ENCODE measurements at regions of chr1 and their contacts with region 1.

Region 1: GRCh38 chr1:42846257-42847110 is at the start of gene ZNF691:
- DNase-seq: peak; percentile 91
- H3K4me3 ChIP-seq: peak within 1 kb of the TSS; percentile 95
- H3K27ac ChIP-seq: no peak within 1 kb of the TSS
- H3K27me3 ChIP-seq: no peaks in the 10 kb centered on the region
- CTCF ChIP-seq: peak; percentile 59
- polyA plus RNA-seq, gene ZNF691: 5.6 and 6.3 TPM in 2 replicates

Region 2: GRCh38 chr1:42816585-42817434 is 29.7 kb before region 1 on chr1 and contains the starts of genes ERMAP and SVBP:
- CTCF ChIA-PET with region 1: interaction called, 18 read pairs
- POLR2A ChIA-PET with region 1: interaction called, 16 read pairs
- DNase-seq: peak; percentile 61
- H3K4me3 ChIP-seq: peak within 1 kb of the TSS; percentile 86
- H3K27ac ChIP-seq: peak within 1 kb of the TSS; percentile 97
- H3K27me3 ChIP-seq: no peaks in the 10 kb centered on the region
- CTCF ChIP-seq: no peak
- polyA plus RNA-seq, gene ERMAP: 16.1 and 18.2 TPM in 2 replicates
- polyA plus RNA-seq, gene SVBP: 25.7 and 29.8 TPM in 2 replicates

Region 3: DNA sequence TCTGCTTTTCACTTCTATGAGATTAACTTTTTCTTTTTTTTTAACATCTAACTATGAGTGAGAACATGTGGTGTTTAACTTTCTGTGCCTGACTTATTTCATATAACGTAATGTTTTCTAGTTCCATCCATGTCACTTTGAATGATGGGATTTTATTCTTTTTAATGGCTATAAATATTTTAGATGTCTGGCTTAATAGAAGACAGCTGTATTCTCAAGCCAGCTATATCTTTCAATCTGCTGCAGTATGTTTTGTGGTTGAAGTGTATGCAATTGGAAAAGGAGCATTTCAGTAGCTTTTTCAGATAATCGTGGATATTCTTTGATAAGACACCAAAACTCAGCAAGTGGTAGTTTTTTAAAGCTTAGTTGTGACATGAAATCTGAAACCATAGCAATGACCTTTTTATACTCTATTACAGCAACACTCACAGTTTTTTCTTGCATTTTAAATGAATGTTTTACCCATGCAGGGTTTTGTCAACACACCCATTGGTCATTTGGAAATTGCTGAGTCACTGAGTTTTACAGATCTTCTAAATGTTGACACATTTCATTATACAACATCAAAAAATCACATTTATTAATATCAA is 23.6 kb before region 1 on chr1:
- CTCF ChIA-PET with region 1: interaction called, 18 read pairs
- POLR2A ChIA-PET with region 1: interaction called, 16 read pairs
- DNase-seq: no peak
- H3K4me3 ChIP-seq: no peak overlapping the region
- H3K27ac ChIP-seq: no peak overlapping the region
- H3K27me3 ChIP-seq: no peaks in the 10 kb centered on the region
- CTCF ChIP-seq: no peak

Measured in AG04450 (cell line).